Right cardiac atrium (tissue), 5 donors: ENCODE measurements at regions of chr3 and their contacts with region 1.

Region 1: GRCh38 chr3:11803977-11804892 is 42.5 kb downstream of the TAMM41 start:
- DNase-seq: peak; percentile 35 to 67 (median 63)
- ATAC-seq: peak; percentile 74 to 77
- H3K4me3 ChIP-seq: no peak overlapping the region
- H3K27ac ChIP-seq: no peak overlapping the region
- H3K4me1 ChIP-seq: no peaks in the 10 kb centered on the region
- H3K27me3 ChIP-seq: no peaks in the 10 kb centered on the region

Region 2: DNA sequence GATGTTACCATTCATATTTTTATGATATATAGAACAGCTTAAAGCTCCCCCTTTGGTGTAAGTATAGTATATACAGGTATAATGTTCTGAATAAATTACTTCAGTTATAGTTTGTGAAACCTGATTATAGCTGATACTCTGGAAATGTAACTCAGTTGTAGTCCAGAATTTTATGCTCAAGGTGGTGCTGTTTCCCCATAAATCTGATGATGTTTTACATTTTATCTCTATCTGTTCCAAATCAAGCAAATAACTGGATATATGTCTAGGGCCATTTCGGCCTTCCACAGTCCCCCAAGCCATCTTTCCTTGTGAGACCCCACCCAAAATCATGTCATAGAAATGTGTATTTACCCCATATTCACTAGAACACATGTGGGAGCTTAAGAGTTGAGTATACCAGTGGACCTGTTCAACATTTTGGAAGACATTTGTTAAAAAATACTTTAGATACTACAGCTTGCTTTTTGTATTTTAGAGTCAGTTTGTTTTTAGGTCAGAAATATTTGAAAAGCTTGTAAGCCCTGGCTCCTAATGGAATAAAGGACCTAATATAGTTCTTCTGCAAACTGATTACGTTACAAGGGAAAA is 424.9 kb before region 1 on chr3:
- intact Hi-C with region 1: loop called (anchors 5 to 10 kb)
- DNase-seq: no peak
- ATAC-seq: peak; percentile 73 to 75
- H3K4me3 ChIP-seq: peak overlapping the region; percentile 44
- H3K27ac ChIP-seq: no peak overlapping the region
- H3K4me1 ChIP-seq: peaks cover 3% of the 10 kb centered on the region
- H3K27me3 ChIP-seq: no peaks in the 10 kb centered on the region

Region 3: DNA sequence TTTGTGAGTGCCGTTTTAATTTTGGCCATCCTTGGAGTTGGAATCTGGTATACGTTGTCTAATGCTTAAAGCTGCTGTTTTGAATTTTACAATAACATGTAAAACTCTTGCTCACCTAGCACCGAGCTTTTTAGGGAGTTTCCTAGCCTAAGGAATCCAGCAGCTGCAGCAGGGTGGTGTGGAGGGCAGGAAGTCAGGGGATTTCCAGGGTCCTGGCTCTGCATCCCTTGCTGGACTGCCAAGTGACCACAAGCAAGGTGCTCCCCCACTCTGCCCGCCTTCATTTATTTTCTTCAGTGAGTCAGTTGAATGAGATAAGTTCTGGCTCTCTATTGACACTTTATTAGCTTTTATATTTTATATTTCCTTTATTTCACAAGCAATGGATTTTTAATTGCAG is 418.3 kb before region 1 on chr3:
- intact Hi-C with region 1: loop called in 3 of 4 experiments (anchors 5 to 10 kb)
- DNase-seq: no peak
- ATAC-seq: peak; percentile 45 to 60
- H3K4me3 ChIP-seq: no peak overlapping the region
- H3K27ac ChIP-seq: no peak overlapping the region
- H3K4me1 ChIP-seq: peaks cover 12% of the 10 kb centered on the region
- H3K27me3 ChIP-seq: no peaks in the 10 kb centered on the region

Region 4: DNA sequence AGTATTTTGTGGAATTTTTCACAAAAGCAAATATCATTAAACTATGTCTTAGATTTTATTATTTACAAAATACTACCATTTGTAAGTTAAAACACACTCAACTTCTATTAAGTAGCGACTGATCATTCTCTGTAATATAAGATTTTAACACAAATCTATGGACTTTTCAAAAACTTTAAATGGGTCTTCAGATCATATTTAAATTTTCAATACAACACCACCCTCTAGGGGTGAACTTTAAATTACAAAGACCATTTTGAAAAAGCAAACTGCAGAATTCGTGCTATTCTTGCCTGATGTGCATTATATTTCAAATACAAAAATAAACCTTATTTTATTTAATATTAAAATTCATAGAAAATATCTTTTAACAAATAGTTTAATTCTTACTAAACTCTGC is 152.3 kb before region 1 on chr3:
- intact Hi-C with region 1: loop called in 2 of 4 experiments (anchors 10 kb)
- DNase-seq: no peak
- ATAC-seq: no peak
- H3K4me3 ChIP-seq: no peak overlapping the region
- H3K27ac ChIP-seq: no peak overlapping the region
- H3K4me1 ChIP-seq: no peaks in the 10 kb centered on the region
- H3K27me3 ChIP-seq: no peaks in the 10 kb centered on the region